Left colon (tissue), 2 donors: ENCODE measurements at regions of chr17 and their contacts with region 1.

Region 1: DNA sequence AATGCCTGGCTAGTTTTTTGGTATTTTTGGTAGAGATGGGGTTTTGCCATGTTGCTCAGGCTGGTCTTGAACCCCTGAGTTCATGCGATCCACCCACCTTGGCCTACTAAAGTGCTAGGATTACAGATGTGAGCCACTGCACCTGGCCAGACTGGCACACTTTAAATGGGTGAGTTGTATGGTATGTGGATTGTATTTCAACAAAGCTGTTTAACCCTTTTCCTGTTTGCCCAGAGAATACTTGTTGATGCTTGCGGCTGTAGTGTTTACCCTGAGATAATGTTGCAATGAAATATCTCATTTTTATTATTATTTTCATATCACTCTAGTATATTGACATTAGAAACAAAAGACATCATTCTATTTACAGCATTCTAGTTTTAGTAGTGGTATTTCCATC is 17.1 kb upstream of the TMEM94 start:
- DNase-seq: no peak
- ATAC-seq: no peak

Region 2: GRCh38 chr17:75012346-75013091 is 426.8 kb before region 1 on chr17 and contains the start of gene MRPL58:
- intact Hi-C with region 1: no loop called
- DNase-seq: peak; percentile 74 to 86
- ATAC-seq: peak; percentile 84
- total RNA-seq, gene MRPL58: 23.6 to 30.4 TPM

Region 3: DNA sequence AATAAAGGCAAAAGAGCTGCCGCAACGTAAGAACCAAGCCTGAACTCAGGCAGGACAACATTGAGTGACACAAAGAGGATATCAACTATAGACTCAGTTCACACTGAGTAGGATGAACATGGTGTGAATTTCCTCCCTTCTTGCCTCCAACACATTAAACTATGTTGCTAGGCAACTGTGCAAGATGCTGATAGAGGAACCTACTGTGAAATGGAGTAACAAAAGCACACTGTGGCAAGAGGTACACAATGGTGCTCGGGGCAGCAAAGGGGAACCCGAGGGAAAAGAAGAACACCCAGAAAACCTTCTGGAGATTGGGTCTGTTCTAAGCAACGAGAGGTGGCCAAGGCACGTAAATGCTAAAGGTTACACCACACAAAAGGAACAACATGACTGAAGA is 67.9 kb before region 1 on chr17:
- intact Hi-C with region 1: no loop called
- DNase-seq: no peak
- ATAC-seq: peak; percentile 22

Region 4: GRCh38 chr17:75472129-75472528 is 32.8 kb after region 1 on chr17:
- intact Hi-C with region 1: loop called in 1 of 2 experiments (anchors 2 kb)
- DNase-seq: no peak
- ATAC-seq: peak; percentile 41